ENCODE measurements at regions of chr17 and their contacts with region 1.

Region 1: DNA sequence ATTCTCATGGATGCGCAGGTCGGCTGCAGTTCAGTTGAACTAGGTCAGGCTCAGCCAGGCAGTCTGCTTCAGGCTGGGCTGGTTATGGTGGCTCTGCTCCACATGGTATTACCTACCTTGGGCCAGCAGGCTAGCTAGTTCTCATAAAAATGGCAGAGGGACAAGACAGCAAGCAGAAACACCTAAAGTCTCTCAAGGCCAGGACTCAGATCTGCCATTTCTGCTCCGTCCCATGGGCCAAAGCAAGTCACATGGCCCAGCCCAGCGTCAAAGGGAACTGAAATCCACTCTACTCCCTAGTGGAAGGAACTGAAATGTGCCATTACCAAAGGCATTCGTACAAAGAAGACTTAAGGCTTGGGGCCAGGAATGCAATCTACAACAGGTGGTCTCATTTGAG is 160.0 kb downstream of the TMEM132E start:
- DNase-seq: no peak
- H3K4me3 ChIP-seq: no peak overlapping the region
- H3K27ac ChIP-seq: no peak overlapping the region
- H3K4me1 ChIP-seq: no peaks in the 10 kb centered on the region
- H3K27me3 ChIP-seq: no peaks in the 10 kb centered on the region
- CTCF ChIP-seq: no peak
- POLR2A ChIP-seq: no peak

Region 2: GRCh38 chr17:34756637-34757021 is 17.2 kb after region 1 on chr17:
- intact Hi-C with region 1: no loop called
- DNase-seq: no peak
- H3K4me3 ChIP-seq: no peak overlapping the region
- H3K27ac ChIP-seq: no peak overlapping the region
- H3K4me1 ChIP-seq: no peaks in the 10 kb centered on the region
- H3K27me3 ChIP-seq: no peaks in the 10 kb centered on the region
- CTCF ChIP-seq: no peak
- POLR2A ChIP-seq: no peak

Region 3: DNA sequence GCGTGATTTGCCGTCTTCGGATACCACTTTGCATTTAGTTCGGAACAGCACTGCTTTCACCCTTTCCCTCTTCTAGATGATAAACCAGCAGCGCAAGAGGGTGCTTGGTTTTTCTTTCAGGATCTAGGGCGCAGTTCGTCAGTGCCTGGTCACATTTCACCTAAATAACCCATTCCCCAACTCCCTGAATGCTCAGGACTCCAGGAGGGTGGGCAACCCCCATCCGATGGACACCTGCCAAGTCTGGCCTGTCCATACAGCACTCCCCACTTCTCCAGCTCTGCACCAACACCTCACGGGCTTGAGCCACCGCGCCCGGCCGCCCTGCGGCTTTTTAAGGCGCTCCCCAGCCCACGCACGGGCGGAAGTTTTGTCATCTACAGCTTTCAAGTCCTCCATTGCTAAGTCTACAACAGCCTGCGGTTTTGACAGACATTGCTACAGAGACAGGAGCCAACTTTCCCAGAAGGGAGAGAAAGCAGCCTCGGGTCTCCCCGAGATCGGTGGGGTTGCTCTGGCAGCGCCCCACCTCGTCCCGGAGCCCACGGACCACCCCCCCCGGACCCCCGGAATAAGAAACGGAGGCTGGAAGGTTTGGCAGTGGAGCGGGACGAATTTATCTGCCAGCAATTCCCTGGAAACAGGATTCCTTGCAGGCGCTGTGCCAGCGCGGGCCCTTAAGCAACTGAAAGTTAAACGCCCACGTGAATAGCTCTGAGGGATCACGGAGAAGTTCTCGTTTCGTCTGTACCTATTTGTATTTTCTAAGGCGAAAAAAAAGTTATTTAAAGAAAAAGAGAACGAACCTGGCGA is 747.7 kb after region 1 on chr17:
- intact Hi-C with region 1: loop called (anchors 5 kb)
- DNase-seq: peak in 1 of 2 donors; percentile 36
- H3K4me3 ChIP-seq: peak overlapping the region; percentile 49 to 85 (median 68)
- H3K27ac ChIP-seq: peak overlapping the region; percentile 71 to 74
- H3K4me1 ChIP-seq: no peaks in the 10 kb centered on the region
- H3K27me3 ChIP-seq: peaks cover 0 to 26% of the 10 kb centered on the region in 2 donors
- CTCF ChIP-seq: no peak
- POLR2A ChIP-seq: no peak